Heart left ventricle (tissue), 16 donors: ENCODE measurements at regions of chr4 and their contacts with region 1.

Region 1: GRCh38 chr4:79576429-79576753 is 168.4 kb upstream of the GK2 start:
- DNase-seq: no peak
- ATAC-seq: peak; percentile 72 to 83 (median 74)
- H3K4me3 ChIP-seq: no peak overlapping the region
- H3K27ac ChIP-seq: peak overlapping the region in 2 of 12 donors; percentile 1 to 50
- H3K4me1 ChIP-seq: peaks cover 0 to 9% (median 0%) of the 10 kb centered on the region in 12 donors
- H3K27me3 ChIP-seq: no peaks in the 10 kb centered on the region
- CTCF ChIP-seq: peak in 11 of 12 donors; percentile 23 to 62 (median 43)
- POLR2A ChIP-seq: no peak

Region 2: DNA sequence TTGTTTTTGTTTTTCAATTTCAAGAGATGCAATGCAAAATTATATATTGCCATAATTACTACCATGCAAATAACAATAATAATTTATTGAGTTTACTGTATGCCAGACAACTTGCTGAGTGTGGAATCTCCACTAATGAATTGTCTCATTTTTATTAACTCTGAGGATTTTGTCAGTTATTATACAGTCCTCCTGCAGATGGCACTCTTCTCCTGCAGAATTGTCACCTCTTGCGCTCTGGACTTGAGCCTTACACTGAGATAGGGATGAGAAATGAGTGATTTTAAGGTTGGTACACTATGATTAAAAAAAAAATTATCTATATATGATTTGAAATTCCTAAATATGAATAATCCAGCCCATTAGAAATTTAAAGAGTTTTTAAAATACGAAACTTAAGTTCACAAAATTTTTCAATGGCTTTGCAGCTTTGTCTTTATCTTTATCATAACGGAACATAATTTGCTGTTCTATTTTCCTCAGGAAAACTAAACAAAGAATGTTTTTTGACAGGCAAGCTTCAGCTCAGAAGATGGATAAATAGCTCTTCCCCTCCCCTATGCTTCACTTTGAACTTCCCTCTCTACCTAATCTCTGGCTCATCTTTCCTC is 624.4 kb before region 1 on chr4:
- intact Hi-C with region 1: loop called (anchors 5 to 10 kb)
- DNase-seq: peak in 1 of 5 donors; percentile 18
- ATAC-seq: peak; percentile 52 to 75 (median 68)
- H3K4me3 ChIP-seq: no peak overlapping the region
- H3K27ac ChIP-seq: no peak overlapping the region
- H3K4me1 ChIP-seq: no peaks in the 10 kb centered on the region
- H3K27me3 ChIP-seq: no peaks in the 10 kb centered on the region
- CTCF ChIP-seq: peak; percentile 54 to 85 (median 70)
- POLR2A ChIP-seq: no peak

Region 3: GRCh38 chr4:79042079-79042674 is 534.2 kb before region 1 on chr4:
- intact Hi-C with region 1: loop called (anchors 2 to 5 kb)
- DNase-seq: no peak
- ATAC-seq: peak in 3 of 4 donors; percentile 44 to 64 (median 61)
- H3K4me3 ChIP-seq: no peak overlapping the region
- H3K27ac ChIP-seq: no peak overlapping the region
- H3K4me1 ChIP-seq: peaks cover 0 to 4% (median 0%) of the 10 kb centered on the region in 12 donors
- H3K27me3 ChIP-seq: no peaks in the 10 kb centered on the region
- CTCF ChIP-seq: peak; percentile 32 to 70 (median 56)
- POLR2A ChIP-seq: no peak

Region 4: GRCh38 chr4:80017125-80017854 is 440.9 kb after region 1 on chr4:
- intact Hi-C with region 1: no loop called
- DNase-seq: no peak
- ATAC-seq: peak in 2 of 4 donors; percentile 14 to 20
- H3K4me3 ChIP-seq: no peak overlapping the region
- H3K27ac ChIP-seq: peak overlapping the region in 2 of 12 donors; percentile 35 to 63
- H3K4me1 ChIP-seq: peaks cover 0 to 32% (median 0%) of the 10 kb centered on the region in 12 donors
- H3K27me3 ChIP-seq: no peaks in the 10 kb centered on the region
- CTCF ChIP-seq: no peak
- POLR2A ChIP-seq: no peak